ENCODE measurements at regions of chr5 and their contacts with region 1.

Region 1: DNA sequence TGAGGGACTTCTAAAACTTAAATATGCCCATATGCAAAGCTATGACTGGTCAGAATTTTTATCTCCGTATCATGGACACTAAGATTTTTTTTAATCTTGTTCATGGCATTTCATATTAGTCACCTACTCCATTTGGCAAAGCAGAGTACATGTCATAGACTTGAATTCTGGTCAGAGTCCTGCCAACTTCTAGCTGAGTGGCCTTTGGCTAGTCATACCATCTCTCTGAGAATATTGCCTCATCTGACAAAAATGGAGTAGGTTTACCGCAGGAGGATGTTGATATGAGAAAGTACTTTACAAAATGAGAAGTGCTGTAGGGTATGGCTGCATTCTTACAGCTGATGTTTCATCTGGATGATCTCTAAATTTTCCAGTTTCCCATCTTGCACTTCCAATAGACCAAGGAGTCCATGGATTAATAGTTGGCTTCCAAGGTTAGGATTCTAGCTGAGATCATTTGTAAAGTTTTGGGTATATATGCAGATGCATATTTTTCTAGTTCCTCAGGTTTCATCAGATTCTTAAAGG is 150.8 kb upstream of the NR3C1 start:
- DNase-seq: peak; percentile 88
- H3K4me3 ChIP-seq: no peak overlapping the region
- H3K27ac ChIP-seq: peak overlapping the region; percentile 82
- H3K27me3 ChIP-seq: no peaks in the 10 kb centered on the region
- CTCF ChIP-seq: no peak

Region 2: GRCh38 chr5:143536364-143536763 is 17.9 kb before region 1 on chr5:
- CTCF ChIA-PET with region 1: interaction called, 3 read pairs
- POLR2A ChIA-PET with region 1: interaction called, 10 read pairs
- DNase-seq: peak; percentile 96
- H3K4me3 ChIP-seq: no peak overlapping the region
- H3K27ac ChIP-seq: peak overlapping the region; percentile 93
- H3K27me3 ChIP-seq: no peaks in the 10 kb centered on the region
- CTCF ChIP-seq: 0 out of 2 replicates have a peak, but pooled peaks have one; percentile 1

Region 3: GRCh38 chr5:143749581-143750205 is 195.4 kb after region 1 on chr5:
- CTCF ChIA-PET with region 1: no interaction called
- POLR2A ChIA-PET with region 1: no interaction called
- DNase-seq: peak; percentile 4
- H3K4me3 ChIP-seq: no peak overlapping the region
- H3K27ac ChIP-seq: no peak overlapping the region
- H3K27me3 ChIP-seq: no peaks in the 10 kb centered on the region
- CTCF ChIP-seq: no peak